HCT116 (cell line): ENCODE measurements at regions of chr1 and their contacts with region 1.

Region 1: GRCh38 chr1:54406339-54407153 is at the start of gene SSBP3:
- DNase-seq: peak; percentile 75
- ATAC-seq: peak; percentile 92
- H3K4me3 ChIP-seq: peak within 1 kb of the TSS; percentile 63 to 70
- H3K27ac ChIP-seq: peak within 1 kb of the TSS; percentile 87
- H3K4me1 ChIP-seq: peaks cover 30 to 41% of the 10 kb centered on the region in 2 experiments
- H3K27me3 ChIP-seq: no peaks in the 10 kb centered on the region
- CTCF ChIP-seq: no peak
- POLR2A ChIP-seq: peak; percentile 31
- RAD21 ChIP-seq: no peak
- total RNA-seq, gene SSBP3: 37.5 TPM

Region 2: DNA sequence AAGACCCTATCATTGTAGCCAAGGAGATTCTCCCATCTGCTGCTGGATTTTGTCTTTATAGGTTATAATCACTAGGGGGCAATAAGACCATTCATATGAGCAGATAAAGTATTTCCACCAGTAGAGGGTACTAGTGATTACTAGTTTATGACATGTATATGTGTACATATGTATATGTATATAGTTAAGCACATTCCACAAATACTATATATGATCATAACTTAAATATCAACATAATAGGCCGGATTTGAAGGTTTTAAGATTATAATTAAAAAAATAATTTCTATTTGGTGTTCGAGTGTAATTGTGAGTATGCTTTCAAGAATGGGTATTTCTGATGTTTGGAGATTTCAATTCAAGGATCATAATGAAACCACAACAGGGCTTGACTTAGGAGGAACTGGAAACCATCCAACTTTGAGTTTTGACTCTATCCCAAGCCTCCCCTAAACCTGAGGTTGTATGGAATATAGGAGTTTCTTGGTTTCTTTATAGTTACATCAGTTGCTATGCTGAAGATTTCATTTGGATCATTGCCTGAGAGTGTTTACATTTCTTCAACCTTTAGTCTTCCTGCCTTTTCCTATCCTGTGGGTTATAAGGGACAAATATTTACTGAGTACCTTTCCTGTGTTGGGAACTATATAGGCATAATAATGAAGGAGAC is 336.2 kb before region 1 on chr1:
- CTCF ChIA-PET with region 1: no interaction called
- POLR2A ChIA-PET with region 1: no interaction called
- RAD21 ChIA-PET with region 1: no interaction called
- intact Hi-C with region 1: loop called (anchors 5 kb)
- DNase-seq: peak; percentile 43
- ATAC-seq: peak; percentile 95
- H3K4me3 ChIP-seq: no peak overlapping the region
- H3K27ac ChIP-seq: no peak overlapping the region
- H3K4me1 ChIP-seq: peaks cover 0 to 4% of the 10 kb centered on the region in 2 experiments; a peak in 1 of 4 replicates
- H3K27me3 ChIP-seq: no peaks in the 10 kb centered on the region
- CTCF ChIP-seq: peak; percentile 76 to 100 (median 92)
- POLR2A ChIP-seq: no peak
- RAD21 ChIP-seq: peak; percentile 91

Region 3: GRCh38 chr1:54121482-54122134 is 284.9 kb before region 1 on chr1:
- CTCF ChIA-PET with region 1: no interaction called
- POLR2A ChIA-PET with region 1: no interaction called
- RAD21 ChIA-PET with region 1: no interaction called
- intact Hi-C with region 1: loop called (anchors 2 kb)
- DNase-seq: peak; percentile 29
- ATAC-seq: peak; percentile 93
- H3K4me3 ChIP-seq: peak overlapping the region; percentile 34 to 46
- H3K27ac ChIP-seq: no peak overlapping the region
- H3K4me1 ChIP-seq: peaks cover 2 to 28% of the 10 kb centered on the region in 2 experiments; a peak in 3 of 4 replicates
- H3K27me3 ChIP-seq: no peaks in the 10 kb centered on the region
- CTCF ChIP-seq: peak; percentile 71 to 83 (median 80)
- POLR2A ChIP-seq: no peak
- RAD21 ChIP-seq: peak; percentile 87

Region 4: GRCh38 chr1:54199765-54200518 is 206.6 kb before region 1 on chr1 and contains the starts of genes CYB5RL and MRPL37:
- CTCF ChIA-PET with region 1: no interaction called
- POLR2A ChIA-PET with region 1: no interaction called
- RAD21 ChIA-PET with region 1: interaction called in 1 of 2 experiments, 4 read pairs
- intact Hi-C with region 1: loop called (anchors 10 kb)
- DNase-seq: peak; percentile 96
- ATAC-seq: peak; percentile 98
- H3K4me3 ChIP-seq: peak within 1 kb of the TSS; percentile 81 to 89
- H3K27ac ChIP-seq: peak within 1 kb of the TSS; percentile 62
- H3K4me1 ChIP-seq: peaks cover 11 to 17% of the 10 kb centered on the region in 2 experiments
- H3K27me3 ChIP-seq: no peaks in the 10 kb centered on the region
- CTCF ChIP-seq: no peak
- POLR2A ChIP-seq: peak; percentile 56
- RAD21 ChIP-seq: no peak
- total RNA-seq, gene CYB5RL: 11.7 TPM
- total RNA-seq, gene MRPL37: 132 TPM